ENCODE measurements at regions of chr5 and their contacts with region 1.

Region 1: GRCh38 chr5:75336625-75337339 is at the start of gene HMGCR:
- DNase-seq: peak; percentile 88 to 100
- ATAC-seq: peak; percentile 97 to 98
- H3K4me3 ChIP-seq: peak within 1 kb of the TSS; percentile 84
- H3K27ac ChIP-seq: peak within 1 kb of the TSS; percentile 85 to 95
- H3K4me1 ChIP-seq: peaks cover 35% of the 10 kb centered on the region
- CTCF ChIP-seq: peak; percentile 30; the same call in 2 of the 3 replicates
- EP300 ChIP-seq: no peak
- POLR2A ChIP-seq: peak; percentile 92
- RAD21 ChIP-seq: peak; percentile 62 to 63; a peak in 4 of 5 replicates
- polyA plus RNA-seq, gene HMGCR: 25.9 and 30.1 TPM in 2 replicates

Region 2: DNA sequence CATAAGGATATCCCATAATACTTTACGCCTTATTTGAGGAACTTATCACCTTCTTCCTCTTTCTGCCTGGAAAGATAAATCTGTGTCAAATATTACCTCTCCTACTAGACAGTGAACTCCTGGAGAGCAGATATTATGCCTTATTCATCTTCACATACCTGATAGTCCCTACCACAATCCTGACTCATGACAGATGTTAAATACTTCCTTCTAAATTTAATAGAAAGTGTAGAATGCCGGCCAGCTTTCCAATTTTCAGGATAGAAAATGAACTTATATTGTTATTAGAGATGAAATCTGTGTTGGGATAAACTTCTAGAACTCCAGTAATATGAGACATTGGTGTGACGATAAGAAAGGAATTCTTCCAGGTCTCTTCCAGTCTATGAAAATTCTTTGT is 373.4 kb before region 1 on chr5:
- CTCF ChIA-PET with region 1: no interaction called
- POLR2A ChIA-PET with region 1: no interaction called
- DNase-seq: no peak
- ATAC-seq: no peak
- H3K4me3 ChIP-seq: no peak overlapping the region
- H3K27ac ChIP-seq: no peak overlapping the region
- H3K4me1 ChIP-seq: no peaks in the 10 kb centered on the region
- CTCF ChIP-seq: no peak
- EP300 ChIP-seq: no peak
- POLR2A ChIP-seq: no peak
- RAD21 ChIP-seq: no peak

Region 3: DNA sequence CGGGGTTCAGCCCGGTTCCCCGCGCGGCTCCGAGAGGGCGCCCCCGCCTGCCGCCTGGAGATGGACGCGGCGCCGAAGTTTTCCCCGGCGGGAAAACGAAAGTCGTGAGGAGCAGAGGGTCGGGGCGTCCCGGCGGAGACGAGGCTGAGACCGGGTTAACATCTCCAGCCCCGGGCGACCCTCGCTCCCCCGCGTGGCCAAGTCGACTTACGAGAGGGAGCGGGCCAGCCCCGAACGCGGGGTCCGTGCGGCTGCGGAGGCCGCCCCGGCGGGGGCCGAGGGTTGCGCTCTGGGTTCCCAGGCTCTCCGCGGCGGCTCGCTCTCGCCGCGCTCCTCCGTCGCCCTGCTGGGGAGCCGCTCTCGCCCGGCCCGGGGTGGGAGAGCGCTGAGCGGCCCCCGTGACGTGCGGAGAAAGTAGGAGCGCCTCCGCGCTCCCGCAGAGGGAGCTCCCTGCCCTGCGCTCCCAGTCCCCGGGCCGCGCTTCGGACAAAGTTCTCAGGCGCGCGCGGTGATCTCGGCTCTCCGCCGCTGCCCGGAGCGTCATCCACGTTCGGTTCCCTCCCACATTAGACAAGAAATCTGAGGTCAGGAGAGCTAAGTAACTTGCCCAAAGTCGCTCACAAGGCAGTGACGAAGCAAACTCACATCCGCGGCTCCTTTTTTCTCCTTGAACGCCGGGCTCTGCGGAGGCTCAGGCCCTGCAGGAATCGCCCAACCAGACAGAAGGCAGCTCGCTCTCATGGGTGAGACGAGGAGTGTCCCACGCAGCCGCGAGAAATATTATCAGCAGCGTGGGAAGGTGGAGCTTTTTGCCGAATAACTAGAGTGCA is 283.3 kb before region 1 on chr5:
- CTCF ChIA-PET with region 1: interaction called, 6 read pairs
- POLR2A ChIA-PET with region 1: interaction called, 13 read pairs
- DNase-seq: peak; percentile 40 to 78
- ATAC-seq: peak; percentile 71 to 75
- H3K4me3 ChIP-seq: peak overlapping the region; percentile 73
- H3K27ac ChIP-seq: peak overlapping the region; percentile 74 to 92
- H3K4me1 ChIP-seq: peaks cover 16% of the 10 kb centered on the region; the same call in 2 of the 3 replicates
- CTCF ChIP-seq: peak; percentile 35; the same call in 2 of the 3 replicates
- EP300 ChIP-seq: no peak
- POLR2A ChIP-seq: no peak
- RAD21 ChIP-seq: 0 out of 5 replicates have a peak, but pooled peaks of 1 of the 2 experiments have one; percentile 14

Region 4: GRCh38 chr5:75320341-75320740 is 16.4 kb before region 1 on chr5:
- CTCF ChIA-PET with region 1: interaction called, 18 read pairs
- POLR2A ChIA-PET with region 1: interaction called, 34 read pairs
- DNase-seq: no peak
- ATAC-seq: no peak
- H3K4me3 ChIP-seq: peak overlapping the region; percentile 8; the same call in 1 of the 3 replicates
- H3K27ac ChIP-seq: peak overlapping the region; percentile 82 to 90
- H3K4me1 ChIP-seq: peaks cover 41% of the 10 kb centered on the region
- CTCF ChIP-seq: no peak
- EP300 ChIP-seq: no peak
- POLR2A ChIP-seq: no peak
- RAD21 ChIP-seq: no peak

Region 5: GRCh38 chr5:75351139-75351926 is 14.6 kb after region 1 on chr5:
- CTCF ChIA-PET with region 1: interaction called, 10 read pairs
- POLR2A ChIA-PET with region 1: interaction called, 5 read pairs
- DNase-seq: no peak
- ATAC-seq: no peak
- H3K4me3 ChIP-seq: no peak overlapping the region
- H3K27ac ChIP-seq: no peak overlapping the region
- H3K4me1 ChIP-seq: no peaks in the 10 kb centered on the region
- CTCF ChIP-seq: no peak
- EP300 ChIP-seq: no peak
- POLR2A ChIP-seq: no peak
- RAD21 ChIP-seq: no peak